MCF 10A (cell line): ENCODE measurements at regions of chr17 and their contacts with region 1.

Region 1: GRCh38 chr17:673200-673681 is 41.4 kb downstream of the VPS53 start:
- DNase-seq: no peak
- H3K4me3 Mint-ChIP-seq: no peak overlapping the region
- H3K27ac Mint-ChIP-seq: no peak overlapping the region
- H3K4me1 Mint-ChIP-seq: peaks cover 10% of the 10 kb centered on the region
- H3K27me3 Mint-ChIP-seq: no peaks in the 10 kb centered on the region
- CTCF ChIP-seq: no peak

Region 2: DNA sequence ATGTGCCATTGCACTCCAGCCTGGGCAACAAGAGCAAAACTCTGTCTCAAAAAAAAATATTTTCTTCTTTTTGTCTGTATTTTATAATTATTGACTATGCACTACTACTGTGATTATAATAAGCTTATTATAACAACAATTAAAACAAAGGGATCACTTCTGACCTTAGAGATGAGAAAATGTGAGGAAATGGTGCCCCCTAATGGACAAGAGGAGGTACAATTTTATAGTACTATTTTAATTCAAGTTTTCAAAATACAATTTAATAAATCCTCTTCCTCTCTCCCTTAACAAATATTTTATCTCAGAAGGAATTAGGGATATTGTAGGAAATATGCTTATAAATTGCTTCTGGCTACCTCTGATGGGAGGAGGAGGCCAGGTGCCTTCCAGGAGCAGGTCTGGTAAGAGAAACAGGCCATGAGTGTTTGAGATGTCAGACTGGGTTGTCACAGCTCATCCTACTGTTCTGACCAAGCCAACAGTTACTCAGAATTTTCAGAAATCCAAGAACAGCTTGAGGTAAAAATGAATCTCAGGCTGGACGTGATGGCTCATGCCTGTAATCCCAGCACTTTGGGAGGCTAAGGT is 27.4 kb after region 1 on chr17:
- CTCF ChIA-PET with region 1: interaction called, 12 read pairs
- POLR2A ChIA-PET with region 1: no interaction called
- intact Hi-C with region 1: no loop called
- DNase-seq: peak; percentile 50
- H3K4me3 Mint-ChIP-seq: no peak overlapping the region
- H3K27ac Mint-ChIP-seq: no peak overlapping the region
- H3K4me1 Mint-ChIP-seq: no peaks in the 10 kb centered on the region
- H3K27me3 Mint-ChIP-seq: no peaks in the 10 kb centered on the region
- CTCF ChIP-seq: peak; percentile 47

Region 3: DNA sequence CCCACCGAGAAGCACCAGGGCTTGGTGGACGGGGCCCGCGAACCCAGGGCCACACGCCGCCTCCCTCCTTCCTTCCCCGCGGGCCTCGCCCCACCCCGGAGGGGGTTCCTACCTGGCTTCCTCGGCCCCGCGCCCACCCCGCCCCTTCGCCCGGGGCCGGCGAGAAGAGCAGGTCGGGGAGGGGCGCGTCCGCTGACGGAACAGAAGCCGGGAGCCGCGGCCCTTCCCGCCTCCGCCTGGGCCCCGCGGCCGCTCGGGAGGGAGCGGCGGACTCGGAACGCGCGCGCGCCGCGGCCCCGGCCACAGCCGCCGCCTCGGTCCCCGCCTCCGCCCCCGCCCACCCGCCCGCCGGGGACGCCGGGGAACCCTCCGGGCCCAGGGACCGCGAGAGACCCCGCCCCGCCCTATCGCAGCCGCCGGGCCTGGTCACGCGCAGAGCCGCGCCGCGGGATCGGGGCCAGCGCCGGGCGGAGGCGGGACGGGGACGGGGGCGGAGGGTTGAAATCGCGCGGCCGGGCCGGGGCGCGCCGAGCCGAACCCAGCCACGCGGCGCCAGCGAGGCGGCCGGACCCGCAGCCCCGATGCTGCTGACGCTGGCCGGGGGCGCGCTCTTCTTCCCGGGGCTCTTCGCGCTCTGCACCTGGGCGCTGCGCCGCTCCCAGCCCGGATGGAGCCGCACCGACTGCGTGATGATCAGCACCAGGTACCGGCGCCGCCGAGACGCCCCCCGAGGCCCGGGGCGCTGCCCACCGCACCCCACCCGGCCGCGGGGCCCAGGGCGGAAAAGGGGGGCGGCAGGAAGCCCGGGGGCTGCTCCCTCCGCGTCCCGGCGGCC is 59.0 kb after region 1 on chr17 and contains the start of gene TLCD3A:
- CTCF ChIA-PET with region 1: no interaction called
- POLR2A ChIA-PET with region 1: no interaction called
- intact Hi-C with region 1: no loop called
- DNase-seq: peak; percentile 60
- H3K4me3 Mint-ChIP-seq: peak within 1 kb of the TSS; percentile 87
- H3K27ac Mint-ChIP-seq: peak within 1 kb of the TSS; percentile 61
- H3K4me1 Mint-ChIP-seq: peaks cover 31% of the 10 kb centered on the region
- H3K27me3 Mint-ChIP-seq: no peaks in the 10 kb centered on the region
- CTCF ChIP-seq: no peak
- total RNA-seq, gene TLCD3A: 28.4 and 31.6 TPM in 2 replicates